ENCODE measurements at regions of chr10 and their contacts with region 1.

Region 1: DNA sequence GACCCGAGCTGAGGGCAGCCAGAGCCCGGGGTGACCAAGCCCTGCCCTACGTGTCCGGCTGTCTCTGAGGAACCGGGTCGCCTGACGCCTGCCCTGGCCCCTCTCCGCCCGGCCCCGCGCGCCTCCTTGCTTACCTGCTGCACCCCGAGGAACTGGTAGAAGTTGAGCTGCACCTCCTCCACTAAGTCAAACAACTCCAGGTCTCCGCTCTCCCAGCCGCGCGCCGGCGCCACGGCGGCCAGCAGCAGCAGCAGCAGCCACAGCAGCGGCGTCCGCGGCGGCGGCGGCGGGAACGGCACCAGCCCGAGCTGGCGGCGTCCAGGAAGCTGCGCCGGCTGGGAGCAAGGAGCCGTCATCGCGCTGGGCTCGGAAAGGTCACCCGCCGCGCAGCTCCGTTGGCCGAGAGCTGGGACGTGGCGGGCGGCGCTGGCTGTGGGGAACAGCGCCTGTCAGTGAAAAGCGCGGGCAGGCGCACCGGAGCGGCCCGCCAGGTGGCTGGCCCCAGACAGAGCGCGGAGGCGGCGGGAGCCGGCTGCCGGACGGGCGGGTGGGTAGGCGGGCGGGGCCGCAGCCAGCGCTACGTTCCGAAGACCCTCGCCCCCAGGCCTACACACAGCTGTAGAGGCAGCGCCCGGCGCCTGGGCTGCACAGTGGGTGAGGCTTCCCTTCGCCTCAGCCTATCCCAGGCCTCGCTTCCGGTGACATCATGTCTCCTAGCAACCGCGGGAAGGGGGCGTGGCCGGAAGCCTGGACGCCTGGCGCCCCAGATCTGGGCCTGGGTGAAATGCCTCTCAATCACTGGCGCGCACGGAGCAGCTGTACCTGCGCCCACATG is at the start of gene DNAJC1:
- DNase-seq: peak; percentile 97 to 99 (median 99)
- ATAC-seq: peak; percentile 96 to 99 (median 97)
- H3K4me3 ChIP-seq: peak within 1 kb of the TSS; percentile 71 to 87 (median 80)
- H3K27ac ChIP-seq: peak within 1 kb of the TSS; percentile 98 to 100 (median 98)
- H3K4me1 ChIP-seq: peaks cover 0 to 16% (median 10%) of the 10 kb centered on the region in 3 donors
- H3K27me3 ChIP-seq: no peaks in the 10 kb centered on the region
- CTCF ChIP-seq: peak in 1 of 4 donors; percentile 13
- total RNA-seq, gene DNAJC1: 20.5 to 30.7 (median 23.1) TPM

Region 2: GRCh38 chr10:22997102-22997501 is 993.8 kb after region 1 on chr10:
- intact Hi-C with region 1: loop called in 1 of 3 experiments (anchors 10 kb)
- DNase-seq: no peak
- ATAC-seq: peak in 1 of 4 donors; percentile 30
- H3K4me3 ChIP-seq: no peak overlapping the region
- H3K27ac ChIP-seq: no peak overlapping the region
- H3K4me1 ChIP-seq: no peaks in the 10 kb centered on the region
- H3K27me3 ChIP-seq: no peaks in the 10 kb centered on the region
- CTCF ChIP-seq: no peak